MCF 10A (cell line): ENCODE measurements at regions of chrX and their contacts with region 1.

Region 1: DNA sequence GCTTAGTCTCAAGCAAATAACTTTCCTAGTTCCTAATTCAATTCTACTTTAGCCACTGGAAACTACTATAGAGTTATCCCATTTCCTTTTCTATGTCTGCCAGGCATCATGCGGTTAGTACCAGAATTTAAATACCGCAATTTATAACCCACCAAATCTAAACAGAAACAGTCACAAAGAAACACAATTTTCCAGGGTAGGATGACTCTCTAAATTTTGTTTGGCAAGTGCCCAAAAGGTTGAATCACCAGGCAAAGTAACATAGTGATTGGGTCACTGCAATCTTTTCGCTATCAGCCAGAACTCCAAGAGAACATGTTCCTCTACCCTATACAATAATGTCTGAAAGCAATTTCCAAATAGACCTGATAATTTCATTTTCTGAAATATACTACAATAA is 240.2 kb upstream of the GRIA3 start:
- DNase-seq: peak; percentile 82
- H3K4me3 Mint-ChIP-seq: no peak overlapping the region
- H3K27ac Mint-ChIP-seq: peak overlapping the region; percentile 67
- H3K4me1 Mint-ChIP-seq: peaks cover 13% of the 10 kb centered on the region
- H3K27me3 Mint-ChIP-seq: no peaks in the 10 kb centered on the region
- CTCF ChIP-seq: no peak

Region 2: DNA sequence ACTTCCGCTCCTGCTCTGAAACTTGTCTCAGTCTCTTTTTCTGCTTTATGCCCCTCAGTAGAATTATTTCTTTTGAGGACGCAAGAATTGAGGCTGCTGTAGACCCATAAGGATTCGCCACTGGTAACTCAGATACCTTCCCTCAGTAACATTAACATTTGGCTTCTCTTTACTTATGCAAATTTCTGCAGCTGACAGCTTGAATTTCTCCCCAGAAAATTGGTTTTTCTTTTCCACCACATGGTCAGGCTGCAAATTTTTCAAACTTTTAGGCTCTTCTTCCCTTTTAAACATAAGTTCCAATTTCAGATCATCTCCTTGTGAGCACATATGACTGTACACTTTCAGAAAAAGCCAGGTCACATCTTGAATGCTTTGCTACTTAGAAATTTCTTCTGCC is 599.1 kb before region 1 on chrX:
- CTCF ChIA-PET with region 1: no interaction called
- POLR2A ChIA-PET with region 1: no interaction called
- intact Hi-C with region 1: no loop called
- DNase-seq: no peak
- H3K4me3 Mint-ChIP-seq: no peak overlapping the region
- H3K27ac Mint-ChIP-seq: no peak overlapping the region
- H3K4me1 Mint-ChIP-seq: no peaks in the 10 kb centered on the region
- H3K27me3 Mint-ChIP-seq: no peaks in the 10 kb centered on the region
- CTCF ChIP-seq: no peak

Region 3: GRCh38 chrX:123049071-123049625 is 105.2 kb after region 1 on chrX:
- CTCF ChIA-PET with region 1: no interaction called
- POLR2A ChIA-PET with region 1: no interaction called
- intact Hi-C with region 1: no loop called
- DNase-seq: no peak
- H3K4me3 Mint-ChIP-seq: no peak overlapping the region
- H3K27ac Mint-ChIP-seq: no peak overlapping the region
- H3K4me1 Mint-ChIP-seq: no peaks in the 10 kb centered on the region
- H3K27me3 Mint-ChIP-seq: no peaks in the 10 kb centered on the region
- CTCF ChIP-seq: no peak

Region 4: DNA sequence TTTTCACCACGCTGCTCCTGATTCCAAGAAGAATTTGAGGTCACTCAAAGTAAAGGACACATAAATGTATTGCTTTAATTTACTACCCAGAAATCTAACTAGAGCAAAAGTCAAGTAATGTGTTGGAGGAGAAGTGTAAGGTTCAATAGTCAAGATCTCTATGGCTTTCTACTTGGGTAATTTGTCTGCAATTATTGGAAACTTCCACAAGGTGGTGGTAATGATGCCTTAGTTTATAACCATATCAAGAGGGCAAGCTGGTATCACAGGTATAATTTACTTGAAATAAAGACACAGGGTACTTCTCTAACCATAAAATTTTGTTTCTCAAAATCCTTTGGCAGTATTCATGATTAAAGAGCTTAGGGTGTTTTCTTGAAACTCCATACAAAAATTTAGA is 229.9 kb after region 1 on chrX:
- CTCF ChIA-PET with region 1: no interaction called
- POLR2A ChIA-PET with region 1: no interaction called
- intact Hi-C with region 1: loop called (anchors 10 kb)
- DNase-seq: peak; percentile 30
- H3K4me3 Mint-ChIP-seq: no peak overlapping the region
- H3K27ac Mint-ChIP-seq: no peak overlapping the region
- H3K4me1 Mint-ChIP-seq: no peaks in the 10 kb centered on the region
- H3K27me3 Mint-ChIP-seq: no peaks in the 10 kb centered on the region
- CTCF ChIP-seq: no peak